OCI-LY7 (cell line): ENCODE measurements at regions of chr4 and their contacts with region 1.

Region 1: GRCh38 chr4:24419181-24420034 is 164.9 kb downstream of the DHX15 start:
- DNase-seq: peak; percentile 73
- H3K4me3 ChIP-seq: no peak overlapping the region
- H3K27ac ChIP-seq: no peak overlapping the region
- H3K4me1 ChIP-seq: no peaks in the 10 kb centered on the region
- CTCF ChIP-seq: peak; percentile 97

Region 2: GRCh38 chr4:22897520-22898108 is 1521.8 kb before region 1 on chr4:
- CTCF ChIA-PET with region 1: no interaction called
- POLR2A ChIA-PET with region 1: no interaction called
- intact Hi-C with region 1: loop called (anchors 10 kb)
- DNase-seq: peak; percentile 27
- H3K4me3 ChIP-seq: no peak overlapping the region
- H3K27ac ChIP-seq: no peak overlapping the region
- H3K4me1 ChIP-seq: no peaks in the 10 kb centered on the region
- CTCF ChIP-seq: peak; percentile 92

Region 3: DNA sequence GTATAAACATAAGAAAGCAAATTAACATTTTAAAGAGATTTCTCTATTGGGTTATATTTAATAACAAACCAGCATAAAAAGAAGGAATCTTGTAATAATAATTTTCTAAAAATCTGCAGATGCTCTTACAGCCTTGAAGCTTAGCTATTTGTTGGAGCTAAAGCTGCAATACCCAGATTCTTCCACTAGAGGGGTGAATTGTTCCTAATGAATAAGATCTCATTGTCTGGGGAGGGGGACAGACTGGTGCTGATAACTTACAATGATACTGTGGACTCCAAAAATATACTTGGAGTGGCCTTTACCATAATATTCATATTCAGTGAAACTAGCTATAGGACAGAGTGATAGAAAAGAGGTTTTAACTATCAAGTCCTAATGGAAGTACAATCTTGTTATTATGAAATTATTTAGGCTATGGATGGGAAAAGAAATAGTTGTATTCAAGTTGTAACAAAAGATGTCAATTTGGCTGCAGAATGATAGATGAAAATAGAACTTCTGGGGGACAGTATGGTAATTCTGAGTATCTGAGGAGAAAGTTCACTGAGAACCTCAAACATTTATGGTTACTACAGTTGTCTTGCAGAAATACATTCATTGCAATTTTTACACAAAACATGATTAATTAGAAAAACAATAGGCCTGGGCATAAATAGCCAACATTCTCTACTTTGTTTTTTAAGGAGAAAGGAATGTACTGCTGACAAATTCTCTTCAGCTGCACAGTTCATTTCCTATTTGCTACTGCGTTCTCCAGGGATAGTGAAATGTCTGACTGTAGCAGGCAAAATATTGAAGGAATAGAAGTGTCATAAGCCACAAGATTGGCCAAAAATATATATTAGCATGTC is 1283.4 kb before region 1 on chr4:
- CTCF ChIA-PET with region 1: no interaction called
- POLR2A ChIA-PET with region 1: no interaction called
- intact Hi-C with region 1: loop called (anchors 5 kb)
- DNase-seq: peak; percentile 63
- H3K4me3 ChIP-seq: no peak overlapping the region
- H3K27ac ChIP-seq: no peak overlapping the region
- H3K4me1 ChIP-seq: no peaks in the 10 kb centered on the region
- CTCF ChIP-seq: peak; percentile 92

Region 4: DNA sequence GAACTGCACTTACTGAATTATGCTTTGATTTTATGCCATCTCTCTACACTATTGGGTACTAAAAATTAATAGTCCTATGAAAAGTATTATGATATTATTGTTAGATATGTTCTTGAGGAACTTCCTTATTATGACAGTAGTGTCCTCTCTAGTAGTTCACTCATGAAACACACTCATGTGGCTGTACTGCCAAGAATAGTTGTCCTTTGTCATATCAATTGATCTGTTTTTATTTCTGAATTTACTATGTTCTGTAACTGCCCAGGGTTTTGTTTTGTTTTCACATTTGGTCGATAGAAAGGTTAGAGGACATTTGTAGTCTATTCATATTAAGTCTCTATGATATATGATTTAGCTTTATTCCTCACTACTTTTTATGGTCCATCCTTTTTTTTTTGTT is 744.7 kb before region 1 on chr4:
- CTCF ChIA-PET with region 1: no interaction called
- POLR2A ChIA-PET with region 1: no interaction called
- intact Hi-C with region 1: loop called (anchors 10 kb)
- DNase-seq: no peak
- H3K4me3 ChIP-seq: no peak overlapping the region
- H3K27ac ChIP-seq: no peak overlapping the region
- H3K4me1 ChIP-seq: no peaks in the 10 kb centered on the region
- CTCF ChIP-seq: no peak

Region 5: DNA sequence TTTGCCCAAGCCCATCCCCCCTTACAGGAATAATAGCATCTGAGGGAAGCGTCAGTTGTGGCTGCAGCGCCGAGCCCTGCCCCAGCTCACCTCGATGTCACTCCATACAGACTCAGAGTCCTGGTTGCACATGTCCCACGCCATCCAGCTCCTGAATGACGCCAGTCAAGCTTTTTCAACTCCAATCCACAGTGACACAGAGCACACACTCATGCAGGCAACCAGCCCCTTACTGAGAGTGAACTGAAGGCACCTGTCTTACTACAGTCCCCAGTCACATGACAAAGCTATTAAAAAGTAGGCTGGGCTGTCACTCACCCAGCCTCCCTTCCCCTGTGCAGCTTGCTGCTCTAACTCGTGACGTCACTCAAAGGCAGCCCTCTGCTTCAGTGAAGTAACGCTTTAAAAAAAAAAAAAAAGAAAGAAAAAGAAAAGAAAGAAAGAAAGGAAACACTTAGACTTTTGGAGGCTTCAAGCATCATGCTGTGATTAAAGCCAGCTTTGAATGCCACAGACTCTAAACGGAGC is 529.5 kb before region 1 on chr4 and contains the start of gene PPARGC1A:
- CTCF ChIA-PET with region 1: no interaction called
- POLR2A ChIA-PET with region 1: no interaction called
- intact Hi-C with region 1: no loop called
- DNase-seq: no peak
- H3K4me3 ChIP-seq: no peak within 1 kb of the TSS
- H3K27ac ChIP-seq: no peak within 1 kb of the TSS
- H3K4me1 ChIP-seq: no peaks in the 10 kb centered on the region
- CTCF ChIP-seq: no peak
- total RNA-seq, gene PPARGC1A: not detected in 2 replicates